Mammary epithelial cell (primary cell): ENCODE measurements at regions of chr6 and their contacts with region 1.

Region 1: GRCh38 chr6:51541847-51542246 is 545.6 kb downstream of the PKHD1 start:
- DNase-seq: peak; percentile 14
- H3K4me3 ChIP-seq: no peak overlapping the region
- H3K27ac ChIP-seq: no peak overlapping the region
- H3K4me1 ChIP-seq: no peaks in the 10 kb centered on the region
- H3K27me3 ChIP-seq: peaks cover 10% of the 10 kb centered on the region
- CTCF ChIP-seq: peak; percentile 17 to 33

Region 2: GRCh38 chr6:51350308-51350904 is 191.4 kb before region 1 on chr6:
- CTCF ChIA-PET with region 1: no interaction called
- dilution Hi-C with region 1: no loop called
- in situ Hi-C with region 1: no loop called
- intact Hi-C with region 1: loop called (anchors 2 kb)
- DNase-seq: no peak
- H3K4me3 ChIP-seq: no peak overlapping the region
- H3K27ac ChIP-seq: no peak overlapping the region
- H3K4me1 ChIP-seq: no peaks in the 10 kb centered on the region
- H3K27me3 ChIP-seq: peaks cover 1% of the 10 kb centered on the region
- CTCF ChIP-seq: peak; percentile 57 to 61